A673 (cell line): ENCODE measurements at regions of chr21 and their contacts with region 1.

Region 1: DNA sequence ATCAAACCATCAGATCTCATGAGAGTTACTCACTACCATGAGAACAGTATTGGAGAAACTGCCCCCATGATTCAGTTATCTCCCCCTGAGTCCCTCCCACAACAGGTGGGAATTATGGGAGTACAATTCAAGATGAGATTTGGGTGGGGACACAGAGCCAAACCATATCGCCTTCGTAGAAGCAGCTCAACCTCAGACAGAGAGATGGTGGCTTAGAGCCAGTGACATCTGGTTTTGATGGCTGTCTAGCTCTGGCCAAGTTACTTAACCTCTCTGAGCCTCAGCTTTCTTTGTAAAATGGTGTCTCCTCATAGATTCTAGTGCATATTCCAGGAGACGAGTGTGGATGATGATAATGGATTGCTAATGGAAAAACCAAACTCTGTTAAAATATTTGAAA is 27.2 kb downstream of the MX1 start:
- DNase-seq: no peak
- H3K4me3 ChIP-seq: no peak overlapping the region
- H3K27ac ChIP-seq: no peak overlapping the region
- H3K4me1 ChIP-seq: no peaks in the 10 kb centered on the region
- H3K27me3 ChIP-seq: no peaks in the 10 kb centered on the region
- CTCF ChIP-seq: no peak

Region 2: DNA sequence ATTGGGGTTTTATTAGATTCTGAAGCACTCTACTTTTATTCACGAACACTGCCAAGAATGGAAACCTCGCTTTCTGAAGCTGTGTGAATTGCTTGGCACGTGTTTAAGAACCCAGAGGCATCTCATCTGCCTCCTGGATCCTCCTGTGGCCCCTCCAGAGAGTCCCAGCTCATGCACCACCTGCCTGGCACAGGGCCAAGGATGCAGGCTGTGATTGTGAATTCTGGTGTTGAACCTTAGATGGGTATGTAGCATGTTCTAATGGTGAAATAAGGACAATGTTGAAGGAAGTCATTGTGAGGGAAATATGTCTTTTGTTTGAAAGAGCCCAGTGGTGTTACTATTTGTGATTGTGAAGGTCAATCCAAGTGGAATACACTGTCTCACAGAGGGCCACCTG is 1559.8 kb before region 1 on chr21:
- CTCF ChIA-PET with region 1: no interaction called
- POLR2A ChIA-PET with region 1: interaction called, 10 read pairs
- intact Hi-C with region 1: no loop called
- DNase-seq: no peak
- H3K4me3 ChIP-seq: no peak overlapping the region
- H3K27ac ChIP-seq: no peak overlapping the region
- H3K4me1 ChIP-seq: no peaks in the 10 kb centered on the region
- H3K27me3 ChIP-seq: peaks cover 12% of the 10 kb centered on the region
- CTCF ChIP-seq: no peak